ENCODE measurements at regions of chr3 and their contacts with region 1.

Region 1: GRCh38 chr3:146326670-146327543 is 76.0 kb upstream of the PLSCR4 start:
- DNase-seq: no peak

Region 2: GRCh38 chr3:146065573-146066006 is 261.3 kb before region 1 on chr3:
- intact Hi-C with region 1: loop called (anchors 10 kb)
- DNase-seq: no peak

Region 3: GRCh38 chr3:146189519-146190173 is 137.3 kb before region 1 on chr3:
- intact Hi-C with region 1: loop called (anchors 10 kb)
- DNase-seq: peak in 2 of 10 donors; percentile 4 to 10

Region 4: GRCh38 chr3:146218880-146219866 is 107.7 kb before region 1 on chr3:
- intact Hi-C with region 1: loop called (anchors 2 kb)
- DNase-seq: peak in 7 of 10 donors; percentile 9 to 58 (median 34)

Region 5: GRCh38 chr3:146269271-146269670 is 57.6 kb before region 1 on chr3:
- intact Hi-C with region 1: no loop called
- DNase-seq: no peak

Measured in posterior cingulate gyrus (tissue), 11 donors.